CD8-positive, alpha-beta memory T cell (primary cell): ENCODE measurements at regions of chr3 and their contacts with region 1.

Region 1: GRCh38 chr3:141412087-141412935 is 44.0 kb downstream of the ZBTB38 start:
- DNase-seq: peak; percentile 35 to 71 (median 57)
- H3K4me3 ChIP-seq: peak overlapping the region; percentile 38
- H3K4me3 Mint-ChIP-seq: peak overlapping the region; percentile 62 to 90 (median 87)
- H3K27ac ChIP-seq: peak overlapping the region; percentile 34
- H3K27ac Mint-ChIP-seq: peak overlapping the region; percentile 97 to 100 (median 99)
- H3K4me1 ChIP-seq: peaks cover 77% of the 10 kb centered on the region
- H3K4me1 Mint-ChIP-seq: peaks cover 82 to 99% (median 98%) of the 10 kb centered on the region in 3 donors
- H3K27me3 ChIP-seq: no peaks in the 10 kb centered on the region
- H3K27me3 Mint-ChIP-seq: no peaks in the 10 kb centered on the region

Region 2: DNA sequence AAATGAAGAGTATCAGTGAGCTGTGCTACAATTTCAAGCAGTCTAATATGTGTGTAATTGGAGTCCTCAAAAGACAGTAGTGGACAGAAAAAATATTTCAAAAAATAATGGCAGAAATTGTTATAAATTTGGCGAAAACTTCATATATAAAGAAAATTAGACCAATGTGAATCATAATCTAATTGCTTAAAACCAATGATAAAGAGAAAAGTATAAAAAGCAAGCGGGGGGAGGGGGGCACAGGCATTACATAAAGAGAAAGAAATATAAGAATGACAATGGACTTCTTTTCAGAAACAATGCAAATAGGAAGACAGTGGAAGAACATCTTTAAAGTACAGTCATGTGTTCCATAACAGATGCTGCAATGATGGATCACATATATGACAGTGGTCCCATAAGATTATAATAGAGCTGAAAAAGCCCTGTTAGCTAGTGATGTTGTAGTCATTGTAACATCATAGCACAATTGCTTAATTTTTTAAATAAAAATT is 188.6 kb before region 1 on chr3:
- CTCF ChIA-PET with region 1: no interaction called
- POLR2A ChIA-PET with region 1: no interaction called
- DNase-seq: no peak
- H3K4me3 ChIP-seq: no peak overlapping the region
- H3K4me3 Mint-ChIP-seq: no peak overlapping the region
- H3K27ac ChIP-seq: no peak overlapping the region
- H3K27ac Mint-ChIP-seq: no peak overlapping the region
- H3K4me1 ChIP-seq: no peaks in the 10 kb centered on the region
- H3K4me1 Mint-ChIP-seq: no peaks in the 10 kb centered on the region
- H3K27me3 ChIP-seq: no peaks in the 10 kb centered on the region
- H3K27me3 Mint-ChIP-seq: peaks cover under 1 to 4% of the 10 kb centered on the region in 2 donors

Region 3: DNA sequence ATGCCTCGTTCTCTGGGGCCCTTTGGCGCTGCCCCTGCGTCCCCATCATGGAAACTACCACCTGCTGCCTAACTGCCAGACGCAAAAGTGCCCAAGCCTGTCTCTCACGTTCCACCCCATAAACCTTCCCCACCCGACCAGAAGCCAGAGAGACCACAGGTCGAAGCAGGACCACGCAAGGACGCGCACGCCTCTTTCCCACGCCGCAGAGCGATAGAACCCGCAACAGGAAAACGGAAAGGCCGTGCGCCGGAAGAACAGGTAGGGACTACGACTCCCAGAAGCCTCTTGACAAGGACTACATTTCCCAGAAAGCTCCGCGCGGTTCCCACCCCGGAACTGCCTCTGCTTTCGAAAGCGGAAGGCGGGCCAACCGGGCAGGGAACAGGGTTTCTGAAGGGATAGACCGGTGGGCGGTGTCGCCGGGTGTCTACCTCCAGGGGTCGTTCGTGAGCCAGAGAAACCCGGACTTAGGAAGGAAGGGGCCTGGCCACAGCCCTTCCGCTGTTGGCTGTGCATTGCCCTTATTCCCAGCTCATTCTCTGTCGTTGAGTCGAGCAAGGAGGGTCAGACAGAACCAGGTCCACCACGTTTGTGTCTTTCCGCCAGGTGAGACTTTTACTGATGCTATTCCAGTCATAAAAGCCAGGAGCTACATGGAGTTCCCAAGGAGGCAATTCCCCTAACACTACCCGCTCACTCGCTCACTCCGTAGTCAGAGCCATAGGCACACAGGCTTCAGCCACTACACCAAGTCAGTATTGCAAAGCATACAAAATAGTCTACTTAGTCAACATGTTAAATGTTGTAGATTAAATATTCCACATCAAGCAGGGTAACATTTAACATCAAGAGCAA is 100.6 kb before region 1 on chr3:
- CTCF ChIA-PET with region 1: interaction called, 10 read pairs
- POLR2A ChIA-PET with region 1: no interaction called
- DNase-seq: peak; percentile 96 to 99 (median 98)
- H3K4me3 ChIP-seq: peak overlapping the region; percentile 58
- H3K4me3 Mint-ChIP-seq: peak overlapping the region; percentile 90 to 98 (median 95)
- H3K27ac ChIP-seq: peak overlapping the region; percentile 66
- H3K27ac Mint-ChIP-seq: peak overlapping the region; percentile 82 to 99 (median 97)
- H3K4me1 ChIP-seq: peaks cover 44% of the 10 kb centered on the region
- H3K4me1 Mint-ChIP-seq: peaks cover 44 to 53% (median 48%) of the 10 kb centered on the region in 3 donors
- H3K27me3 ChIP-seq: no peaks in the 10 kb centered on the region
- H3K27me3 Mint-ChIP-seq: peaks cover 0 to 1% of the 10 kb centered on the region in 2 donors

Region 4: GRCh38 chr3:141331377-141332318 is 80.7 kb before region 1 on chr3:
- CTCF ChIA-PET with region 1: no interaction called
- POLR2A ChIA-PET with region 1: no interaction called
- DNase-seq: no peak
- H3K4me3 ChIP-seq: no peak overlapping the region
- H3K4me3 Mint-ChIP-seq: no peak overlapping the region
- H3K27ac ChIP-seq: peak overlapping the region; percentile 45
- H3K27ac Mint-ChIP-seq: no peak overlapping the region
- H3K4me1 ChIP-seq: no peaks in the 10 kb centered on the region
- H3K4me1 Mint-ChIP-seq: no peaks in the 10 kb centered on the region
- H3K27me3 ChIP-seq: no peaks in the 10 kb centered on the region
- H3K27me3 Mint-ChIP-seq: peaks cover 10 to 25% of the 10 kb centered on the region in 2 donors

Region 5: DNA sequence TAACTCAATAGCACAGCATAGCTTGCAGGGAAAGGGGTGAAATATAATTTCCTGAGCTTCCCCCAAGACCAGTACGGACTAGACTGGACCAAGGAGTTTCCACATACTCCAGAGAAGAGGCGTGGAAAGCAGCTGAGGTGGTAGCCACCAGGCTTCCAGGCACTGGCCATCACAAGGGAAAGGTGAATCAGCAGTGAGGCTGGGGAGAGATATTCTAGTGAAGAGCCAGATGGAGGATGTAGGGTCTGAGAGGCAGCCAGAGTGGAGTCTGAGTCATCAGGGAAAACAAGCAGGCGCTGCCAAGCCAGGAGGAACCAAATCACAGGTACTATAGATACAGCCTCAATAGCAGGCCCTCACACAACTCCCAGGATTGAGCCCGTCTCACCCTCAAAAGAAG is 64.9 kb after region 1 on chr3:
- CTCF ChIA-PET with region 1: no interaction called
- POLR2A ChIA-PET with region 1: no interaction called
- DNase-seq: no peak
- H3K4me3 ChIP-seq: no peak overlapping the region
- H3K4me3 Mint-ChIP-seq: no peak overlapping the region
- H3K27ac ChIP-seq: no peak overlapping the region
- H3K27ac Mint-ChIP-seq: no peak overlapping the region
- H3K4me1 ChIP-seq: peaks cover 17% of the 10 kb centered on the region
- H3K4me1 Mint-ChIP-seq: peaks cover 28 to 43% (median 38%) of the 10 kb centered on the region in 3 donors
- H3K27me3 ChIP-seq: no peaks in the 10 kb centered on the region
- H3K27me3 Mint-ChIP-seq: peaks cover 0 to 6% of the 10 kb centered on the region in 2 donors